WTC11 (cell line): ENCODE measurements at regions of chr18 and their contacts with region 1.

Region 1: GRCh38 chr18:48037481-48038271 is 107.2 kb upstream of the SMAD2 start:
- DNase-seq: peak; percentile 58
- ATAC-seq: peak; percentile 86
- H3K4me3 Mint-ChIP-seq: no peak overlapping the region
- H3K27ac Mint-ChIP-seq: no peak overlapping the region
- H3K4me1 Mint-ChIP-seq: no peaks in the 10 kb centered on the region
- H3K27me3 Mint-ChIP-seq: no peaks in the 10 kb centered on the region
- CTCF ChIP-seq: no peak

Region 2: GRCh38 chr18:48059455-48060010 is 21.9 kb after region 1 on chr18:
- CTCF ChIA-PET with region 1: interaction called, 14 read pairs
- POLR2A ChIA-PET with region 1: no interaction called
- DNase-seq: peak; percentile 40
- ATAC-seq: peak; percentile 78
- H3K4me3 Mint-ChIP-seq: no peak overlapping the region
- H3K27ac Mint-ChIP-seq: no peak overlapping the region
- H3K4me1 Mint-ChIP-seq: peaks cover 29% of the 10 kb centered on the region
- H3K27me3 Mint-ChIP-seq: peaks cover 5% of the 10 kb centered on the region; the same call in 1 of the 2 replicates
- CTCF ChIP-seq: no peak

Region 3: GRCh38 chr18:48106976-48107711 is 69.5 kb after region 1 on chr18:
- CTCF ChIA-PET with region 1: interaction called, 13 read pairs
- POLR2A ChIA-PET with region 1: no interaction called
- DNase-seq: no peak
- ATAC-seq: peak; percentile 59
- H3K4me3 Mint-ChIP-seq: no peak overlapping the region; the same call in 1 of the 2 replicates
- H3K27ac Mint-ChIP-seq: no peak overlapping the region
- H3K4me1 Mint-ChIP-seq: peaks cover 39% of the 10 kb centered on the region
- H3K27me3 Mint-ChIP-seq: peaks cover 6% of the 10 kb centered on the region
- CTCF ChIP-seq: no peak

Region 4: GRCh38 chr18:48161191-48161910 is 123.7 kb after region 1 on chr18:
- CTCF ChIA-PET with region 1: interaction called, 11 read pairs
- POLR2A ChIA-PET with region 1: no interaction called
- DNase-seq: peak; percentile 78
- ATAC-seq: peak; percentile 91
- H3K4me3 Mint-ChIP-seq: peak overlapping the region; percentile 68
- H3K27ac Mint-ChIP-seq: no peak overlapping the region
- H3K4me1 Mint-ChIP-seq: peaks cover 28% of the 10 kb centered on the region
- H3K27me3 Mint-ChIP-seq: peaks cover 71% of the 10 kb centered on the region
- CTCF ChIP-seq: no peak

Region 5: DNA sequence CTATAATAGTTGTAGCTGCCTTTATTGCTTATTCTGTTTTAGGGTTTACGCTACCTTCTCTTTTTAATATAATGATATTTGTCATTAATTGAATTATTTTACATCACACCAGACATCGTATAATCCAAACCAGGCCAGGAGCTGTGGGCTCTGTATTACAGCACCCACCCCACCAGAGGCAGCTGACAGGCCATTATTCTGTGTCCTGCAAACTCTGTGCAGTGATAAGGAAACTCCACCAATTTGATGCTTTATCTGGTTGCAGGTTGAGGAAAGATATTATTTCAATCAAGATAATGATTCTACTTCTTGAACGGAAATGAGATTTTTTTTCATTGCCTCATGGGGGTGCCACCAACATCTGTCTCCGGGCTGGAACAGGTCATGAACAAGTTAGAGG is 144.2 kb after region 1 on chr18:
- CTCF ChIA-PET with region 1: interaction called, 17 read pairs
- POLR2A ChIA-PET with region 1: no interaction called
- DNase-seq: no peak
- ATAC-seq: no peak
- H3K4me3 Mint-ChIP-seq: no peak overlapping the region
- H3K27ac Mint-ChIP-seq: no peak overlapping the region
- H3K4me1 Mint-ChIP-seq: peaks cover 20% of the 10 kb centered on the region
- H3K27me3 Mint-ChIP-seq: no peaks in the 10 kb centered on the region
- CTCF ChIP-seq: no peak

Region 6: GRCh38 chr18:48230467-48231113 is 192.9 kb after region 1 on chr18:
- CTCF ChIA-PET with region 1: interaction called, 15 read pairs
- POLR2A ChIA-PET with region 1: no interaction called
- DNase-seq: peak; percentile 84
- ATAC-seq: peak; percentile 96
- H3K4me3 Mint-ChIP-seq: no peak overlapping the region
- H3K27ac Mint-ChIP-seq: no peak overlapping the region
- H3K4me1 Mint-ChIP-seq: peaks cover 6% of the 10 kb centered on the region
- H3K27me3 Mint-ChIP-seq: no peaks in the 10 kb centered on the region
- CTCF ChIP-seq: peak; percentile 65